Psoas muscle (tissue), 8 donors: ENCODE measurements at regions of chr16 and their contacts with region 1.

Region 1: DNA sequence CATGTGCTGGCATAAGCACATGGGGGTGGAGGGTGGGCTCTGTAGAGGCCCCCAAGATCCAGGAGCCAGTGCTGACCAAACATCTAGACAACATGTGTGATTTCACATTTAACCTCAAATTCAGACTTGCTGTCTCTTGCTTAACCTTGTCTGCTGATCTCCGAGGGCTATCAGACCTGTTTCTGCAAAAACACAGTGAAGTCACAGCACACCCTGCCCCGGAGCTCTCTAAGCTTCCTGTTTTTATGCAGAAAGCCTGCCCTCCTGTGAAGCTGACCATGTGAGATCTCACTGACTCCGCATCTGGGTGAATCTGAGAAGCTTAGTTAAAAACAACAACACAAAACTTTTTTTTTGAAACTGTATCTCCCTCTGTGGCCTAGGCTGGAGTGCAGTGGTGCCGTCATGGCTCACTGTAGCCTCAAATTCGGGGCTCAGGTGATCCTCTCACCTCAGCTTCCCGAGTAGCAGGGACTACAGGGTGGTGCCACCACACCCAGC is 6.6 kb upstream of the DPEP2 start:
- DNase-seq: no peak
- ATAC-seq: peak in 2 of 4 donors; percentile 41 to 50
- H3K4me3 ChIP-seq: no peak overlapping the region
- H3K27ac ChIP-seq: peak overlapping the region; percentile 36
- H3K4me1 ChIP-seq: no peaks in the 10 kb centered on the region
- H3K27me3 ChIP-seq: no peaks in the 10 kb centered on the region
- CTCF ChIP-seq: no peak

Region 2: GRCh38 chr16:68035227-68035626 is 29.4 kb after region 1 on chr16:
- intact Hi-C with region 1: loop called in 1 of 2 experiments (anchors 1 kb)
- DNase-seq: no peak
- ATAC-seq: no peak
- H3K4me3 ChIP-seq: no peak overlapping the region
- H3K27ac ChIP-seq: no peak overlapping the region
- H3K4me1 ChIP-seq: peaks cover 8% of the 10 kb centered on the region
- H3K27me3 ChIP-seq: no peaks in the 10 kb centered on the region
- CTCF ChIP-seq: no peak

Region 3: DNA sequence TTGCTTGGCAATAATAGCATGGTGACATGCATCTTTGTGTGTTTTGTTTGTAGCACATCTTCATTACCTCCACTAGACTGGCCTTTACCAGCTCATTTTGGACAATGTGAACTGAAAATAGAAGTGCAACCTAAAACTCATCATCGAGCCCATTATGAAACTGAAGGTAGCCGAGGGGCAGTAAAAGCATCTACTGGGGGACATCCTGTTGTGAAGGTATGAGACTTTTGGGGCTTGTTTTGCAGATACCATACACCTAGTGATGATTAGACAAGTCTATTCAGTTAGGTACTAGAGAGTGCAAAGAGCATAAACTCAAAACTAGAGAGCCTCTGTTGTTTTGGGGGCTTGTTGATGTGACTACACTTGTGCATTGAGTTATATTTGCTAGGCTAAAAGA is 120.6 kb after region 1 on chr16:
- intact Hi-C with region 1: no loop called
- DNase-seq: no peak
- ATAC-seq: no peak
- H3K4me3 ChIP-seq: no peak overlapping the region
- H3K27ac ChIP-seq: no peak overlapping the region
- H3K4me1 ChIP-seq: peaks cover 35% of the 10 kb centered on the region
- H3K27me3 ChIP-seq: no peaks in the 10 kb centered on the region
- CTCF ChIP-seq: no peak